ENCODE measurements at regions of chr2 and their contacts with region 1.

Region 1: GRCh38 chr2:1136057-1136456 is 185.4 kb downstream of the SNTG2 start:
- DNase-seq: no peak
- ATAC-seq: no peak
- H3K4me3 ChIP-seq: no peak overlapping the region
- H3K4me3 Mint-ChIP-seq: no peak overlapping the region
- H3K27ac ChIP-seq: no peak overlapping the region
- H3K27ac Mint-ChIP-seq: peak overlapping the region in 2 of 9 donors; percentile 4 to 6
- H3K4me1 ChIP-seq: peaks cover 0 to 4% of the 10 kb centered on the region in 2 donors
- H3K4me1 Mint-ChIP-seq: peaks cover 9 to 53% (median 39%) of the 10 kb centered on the region in 7 donors
- H3K27me3 ChIP-seq: no peaks in the 10 kb centered on the region
- H3K27me3 Mint-ChIP-seq: peaks cover 0 to 4% (median 0%) of the 10 kb centered on the region in 5 donors

Region 2: GRCh38 chr2:854460-854859 is 281.6 kb before region 1 on chr2:
- CTCF ChIA-PET with region 1: no interaction called
- POLR2A ChIA-PET with region 1: no interaction called
- intact Hi-C with region 1: loop called in 1 of 2 experiments (anchors 10 kb)
- DNase-seq: peak in 5 of 9 donors; percentile 25 to 64 (median 29)
- ATAC-seq: no peak
- H3K4me3 ChIP-seq: no peak overlapping the region
- H3K4me3 Mint-ChIP-seq: peak overlapping the region in 2 of 10 donors; percentile 19 to 53
- H3K27ac ChIP-seq: no peak overlapping the region
- H3K27ac Mint-ChIP-seq: peak overlapping the region in 2 of 9 donors; percentile 14 to 20
- H3K4me1 ChIP-seq: peaks cover 5 to 6% of the 10 kb centered on the region in 2 donors
- H3K4me1 Mint-ChIP-seq: peaks cover 12 to 27% (median 19%) of the 10 kb centered on the region in 7 donors
- H3K27me3 ChIP-seq: no peaks in the 10 kb centered on the region
- H3K27me3 Mint-ChIP-seq: no peaks in the 10 kb centered on the region

Region 3: GRCh38 chr2:1297372-1298159 is 161.5 kb after region 1 on chr2:
- CTCF ChIA-PET with region 1: no interaction called
- POLR2A ChIA-PET with region 1: no interaction called
- intact Hi-C with region 1: no loop called
- DNase-seq: no peak
- ATAC-seq: no peak
- H3K4me3 ChIP-seq: no peak overlapping the region
- H3K4me3 Mint-ChIP-seq: no peak overlapping the region
- H3K27ac ChIP-seq: no peak overlapping the region
- H3K27ac Mint-ChIP-seq: no peak overlapping the region
- H3K4me1 ChIP-seq: no peaks in the 10 kb centered on the region
- H3K4me1 Mint-ChIP-seq: peaks cover 0 to 10% (median 5%) of the 10 kb centered on the region in 7 donors
- H3K27me3 ChIP-seq: no peaks in the 10 kb centered on the region
- H3K27me3 Mint-ChIP-seq: no peaks in the 10 kb centered on the region